Ascending aorta (tissue), 2 donors: ENCODE measurements at regions of chr4 and their contacts with region 1.

Region 1: DNA sequence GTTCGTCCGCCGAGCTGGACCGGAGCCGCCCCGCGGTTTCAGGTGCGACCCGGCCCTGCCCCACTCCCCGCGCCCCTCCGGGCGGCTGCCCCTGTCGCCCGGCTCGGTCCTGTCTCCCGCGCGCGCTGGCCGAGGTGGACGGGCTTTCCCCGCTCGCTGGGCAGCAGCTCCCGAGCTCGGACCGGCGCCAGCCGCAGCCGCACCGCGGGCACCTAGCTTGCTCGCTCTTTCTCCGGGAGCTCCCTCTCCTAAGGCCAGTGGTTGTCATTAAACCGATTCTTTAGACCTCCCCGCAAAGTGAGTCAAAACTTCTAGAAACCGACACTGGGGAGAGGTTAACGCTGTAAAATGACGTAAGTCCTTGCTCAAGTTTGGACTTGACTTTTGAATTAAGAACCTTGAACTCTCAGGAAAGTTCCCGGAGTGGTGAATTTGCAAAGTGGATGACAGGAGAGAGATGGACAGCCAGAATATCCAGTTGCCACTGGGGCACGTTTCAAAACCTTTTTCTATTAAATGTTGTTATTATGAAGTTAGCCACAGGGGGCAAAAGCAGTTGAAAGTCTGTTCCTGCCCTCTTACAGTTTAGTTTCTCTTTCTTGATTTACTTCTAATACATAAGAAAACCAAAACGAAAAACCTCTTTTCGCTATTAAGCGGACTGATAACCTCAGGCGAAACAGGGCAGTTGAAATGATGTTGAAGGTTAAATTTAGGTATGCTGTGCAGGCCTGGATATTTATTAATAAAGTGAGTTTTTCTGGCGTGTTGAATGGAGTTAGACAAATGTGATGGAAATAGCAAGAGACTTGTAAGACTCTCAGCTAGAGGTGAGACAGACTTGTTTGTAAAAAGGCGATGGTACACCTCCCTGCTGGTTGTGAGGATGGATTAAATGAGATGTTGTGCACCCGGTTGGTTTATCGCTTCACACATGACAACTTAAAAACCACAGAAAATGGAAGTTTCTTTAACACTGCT is 847 bp downstream of the PI4K2B start:
- DNase-seq: peak in 1 of 2 donors; percentile 70
- H3K4me3 ChIP-seq: peak overlapping the region; percentile 81 to 100
- H3K27ac ChIP-seq: peak overlapping the region; percentile 96 to 99
- H3K4me1 ChIP-seq: peaks cover 0 to 8% of the 10 kb centered on the region in 2 donors
- H3K27me3 ChIP-seq: no peaks in the 10 kb centered on the region
- CTCF ChIP-seq: peak in 2 of 3 experiments; percentile 54 to 55

Region 2: GRCh38 chr4:24856586-24856985 is 378.1 kb before region 1 on chr4:
- intact Hi-C with region 1: loop called (anchors 10 kb)
- DNase-seq: peak in 1 of 2 donors; percentile 90
- H3K4me3 ChIP-seq: no peak overlapping the region
- H3K27ac ChIP-seq: peak overlapping the region; percentile 72 to 73
- H3K4me1 ChIP-seq: peaks cover 14 to 47% of the 10 kb centered on the region in 2 donors
- H3K27me3 ChIP-seq: no peaks in the 10 kb centered on the region
- CTCF ChIP-seq: no peak

Region 3: GRCh38 chr4:25030277-25031076 is 204.2 kb before region 1 on chr4 and contains the start of gene LGI2:
- intact Hi-C with region 1: loop called (anchors 10 kb)
- DNase-seq: peak; percentile 11 to 79
- H3K4me3 ChIP-seq: peak within 1 kb of the TSS; percentile 66 to 73
- H3K27ac ChIP-seq: peak within 1 kb of the TSS in 1 of 2 donors; percentile 66
- H3K4me1 ChIP-seq: peaks cover 0 to 4% of the 10 kb centered on the region in 2 donors
- H3K27me3 ChIP-seq: no peaks in the 10 kb centered on the region
- CTCF ChIP-seq: no peak
- total RNA-seq, gene LGI2: 2.2 TPM

Region 4: DNA sequence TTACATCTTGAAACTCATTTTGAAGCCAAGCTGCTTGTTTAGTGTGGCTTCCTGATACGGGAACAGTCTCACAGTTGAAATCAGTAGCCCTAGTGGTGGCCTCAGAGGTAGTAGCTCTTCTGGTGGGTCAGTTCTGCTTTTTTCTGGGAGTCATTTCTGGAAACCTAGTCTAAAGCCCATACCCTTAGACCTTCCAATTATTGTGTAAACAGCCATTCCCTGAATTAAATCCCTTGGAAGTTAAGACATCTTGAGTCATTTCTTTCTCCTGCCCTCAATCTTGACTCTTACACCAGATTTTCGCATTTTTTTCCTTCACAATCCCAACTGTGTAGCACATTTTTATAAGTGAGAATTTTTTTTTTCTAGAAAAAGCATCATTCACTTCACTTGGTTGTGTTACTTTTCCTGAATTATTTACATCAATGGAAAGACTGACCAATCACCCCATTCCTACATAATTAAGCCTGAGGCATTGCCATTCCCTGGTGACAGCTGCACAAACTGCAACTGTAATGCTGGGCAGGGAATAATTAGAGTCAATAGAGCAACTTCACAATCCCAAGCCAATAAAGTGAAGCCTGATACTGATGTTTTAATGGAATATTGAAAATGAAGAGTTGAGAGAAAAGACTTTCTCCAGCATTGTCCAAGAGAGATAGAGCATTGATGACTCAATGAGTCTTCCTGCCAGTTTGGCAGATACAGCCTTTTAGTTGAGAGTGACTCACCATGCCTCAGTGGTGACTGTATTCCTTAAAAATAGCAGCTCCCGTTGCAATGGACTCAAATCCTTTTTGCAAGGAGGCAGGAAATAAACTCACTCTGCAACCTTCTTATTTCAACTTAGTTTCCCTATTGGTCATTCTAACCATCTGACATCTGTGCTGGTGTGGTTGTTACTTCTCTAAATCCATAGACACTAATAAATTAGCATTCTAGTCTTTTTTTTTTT is 61.4 kb before region 1 on chr4:
- intact Hi-C with region 1: loop called (anchors 1 kb)
- DNase-seq: peak; percentile 28 to 89
- H3K4me3 ChIP-seq: no peak overlapping the region
- H3K27ac ChIP-seq: peak overlapping the region; percentile 76 to 78
- H3K4me1 ChIP-seq: peaks cover 2 to 14% of the 10 kb centered on the region in 2 donors
- H3K27me3 ChIP-seq: no peaks in the 10 kb centered on the region
- CTCF ChIP-seq: no peak

Region 5: DNA sequence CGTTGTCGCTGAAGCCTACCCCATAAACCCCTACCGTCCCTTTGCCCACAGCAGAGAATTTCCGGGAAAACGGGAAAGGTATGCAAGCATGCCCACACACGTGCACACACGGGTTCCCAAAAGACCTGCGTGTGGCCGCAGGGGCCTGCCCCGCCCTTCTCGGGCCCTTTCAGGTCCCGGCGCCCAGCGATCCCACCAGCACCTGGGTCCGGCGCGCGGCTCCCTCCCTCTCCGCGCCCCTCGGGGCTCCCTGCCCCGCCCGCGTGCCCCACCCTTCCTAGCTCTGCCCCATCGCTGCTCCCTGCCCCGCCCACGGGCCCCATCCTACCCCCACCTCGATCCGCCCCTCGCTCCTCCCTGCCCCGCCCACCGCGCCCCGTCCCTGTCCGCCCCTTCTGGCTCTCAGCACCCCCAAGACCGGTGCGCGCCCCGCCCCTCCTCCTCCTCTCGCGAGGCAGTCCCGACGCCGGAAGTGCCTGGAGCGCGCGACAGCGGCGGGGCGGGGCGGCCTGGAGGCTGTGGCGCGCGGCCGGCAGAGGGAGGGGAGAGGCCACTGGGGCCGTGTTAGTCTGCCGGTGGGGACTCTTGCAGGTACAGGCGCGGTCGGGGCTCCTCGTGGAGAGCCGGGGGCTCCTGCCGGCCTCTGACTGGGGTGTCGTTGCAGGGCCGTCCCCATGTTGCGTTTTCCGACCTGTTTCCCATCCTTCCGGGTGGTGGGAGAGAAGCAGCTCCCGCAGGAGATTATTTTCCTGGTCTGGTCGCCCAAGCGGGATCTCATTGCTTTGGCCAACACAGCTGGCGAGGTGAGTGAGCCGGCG is 142.3 kb after region 1 on chr4 and contains the start of gene ANAPC4:
- intact Hi-C with region 1: loop called (anchors 2 kb)
- DNase-seq: peak; percentile 83 to 95
- H3K4me3 ChIP-seq: peak within 1 kb of the TSS; percentile 79 to 94
- H3K27ac ChIP-seq: peak within 1 kb of the TSS; percentile 71 to 85
- H3K4me1 ChIP-seq: peaks cover 0 to 3% of the 10 kb centered on the region in 2 donors
- H3K27me3 ChIP-seq: no peaks in the 10 kb centered on the region
- CTCF ChIP-seq: peak in 1 of 3 experiments; percentile 3
- total RNA-seq, gene ANAPC4: 23.4 TPM